ENCODE measurements at regions of chr10 and their contacts with region 1.

Region 1: GRCh38 chr10:103192451-103193106 is 493 bp downstream of the NT5C2 start:
- DNase-seq: peak; percentile 15
- H3K4me3 ChIP-seq: peak overlapping the region; percentile 83
- H3K27ac ChIP-seq: peak overlapping the region; percentile 92
- H3K27me3 ChIP-seq: no peaks in the 10 kb centered on the region
- CTCF ChIP-seq: no peak

Region 2: GRCh38 chr10:103153302-103154197 is 39.0 kb before region 1 on chr10:
- CTCF ChIA-PET with region 1: no interaction called
- POLR2A ChIA-PET with region 1: interaction called, 12 read pairs
- DNase-seq: no peak
- H3K4me3 ChIP-seq: peak overlapping the region; percentile 33; the same call in 1 of the 2 replicates
- H3K27ac ChIP-seq: peak overlapping the region; percentile 74
- H3K27me3 ChIP-seq: no peaks in the 10 kb centered on the region
- CTCF ChIP-seq: no peak

Region 3: GRCh38 chr10:103231047-103231551 is 38.5 kb after region 1 on chr10:
- CTCF ChIA-PET with region 1: interaction called, 3 read pairs
- POLR2A ChIA-PET with region 1: interaction called, 31 read pairs
- DNase-seq: peak; percentile 91
- H3K4me3 ChIP-seq: no peak overlapping the region
- H3K27ac ChIP-seq: peak overlapping the region; percentile 99
- H3K27me3 ChIP-seq: no peaks in the 10 kb centered on the region
- CTCF ChIP-seq: no peak

Region 4: GRCh38 chr10:103238506-103239252 is 46.1 kb after region 1 on chr10:
- CTCF ChIA-PET with region 1: interaction called, 28 read pairs
- POLR2A ChIA-PET with region 1: interaction called, 12 read pairs
- DNase-seq: peak; percentile 15
- H3K4me3 ChIP-seq: no peak overlapping the region
- H3K27ac ChIP-seq: no peak overlapping the region
- H3K27me3 ChIP-seq: no peaks in the 10 kb centered on the region
- CTCF ChIP-seq: peak; percentile 56

Region 5: DNA sequence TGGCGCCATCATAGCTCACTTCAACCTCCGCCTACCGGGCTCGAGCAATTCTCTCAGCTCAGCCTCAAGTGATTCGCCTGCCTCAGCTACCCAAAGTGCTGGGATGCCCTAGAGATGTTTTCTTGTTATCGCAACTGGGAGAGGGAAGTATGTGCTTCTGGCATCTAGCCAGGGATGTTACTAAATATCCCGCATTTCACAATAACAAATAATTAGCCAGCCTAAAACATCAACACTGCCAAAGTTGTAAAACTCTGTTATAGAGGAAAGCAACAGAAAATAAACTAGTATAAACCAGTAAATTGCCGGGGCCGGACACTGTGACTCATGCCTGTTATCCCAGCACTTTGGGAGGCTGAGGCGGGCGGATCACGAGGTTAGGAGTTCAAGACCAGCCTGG is 91.6 kb after region 1 on chr10:
- CTCF ChIA-PET with region 1: no interaction called
- POLR2A ChIA-PET with region 1: no interaction called
- DNase-seq: no peak
- H3K4me3 ChIP-seq: no peak overlapping the region
- H3K27ac ChIP-seq: no peak overlapping the region
- H3K27me3 ChIP-seq: peaks cover 2% of the 10 kb centered on the region
- CTCF ChIP-seq: no peak

Region 6: DNA sequence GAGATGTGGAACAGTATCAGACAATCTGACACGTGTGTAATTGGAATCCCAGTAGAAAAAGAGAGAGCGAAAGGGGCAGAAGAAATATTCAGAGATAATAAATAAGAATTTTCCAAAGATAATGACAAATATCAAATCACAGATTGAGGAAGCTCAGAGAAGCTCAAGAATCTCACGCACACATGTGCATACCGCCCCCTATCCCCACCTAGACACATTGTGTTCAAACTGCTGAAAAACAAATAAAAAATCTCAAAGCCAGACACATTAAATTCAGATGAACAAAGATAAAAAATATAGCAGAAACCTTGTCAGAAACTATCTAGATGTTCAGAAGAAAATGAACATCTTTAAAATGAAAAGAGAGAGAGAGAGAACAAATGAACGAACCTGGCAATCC is 946.6 kb after region 1 on chr10:
- CTCF ChIA-PET with region 1: no interaction called
- POLR2A ChIA-PET with region 1: no interaction called
- DNase-seq: no peak
- H3K4me3 ChIP-seq: no peak overlapping the region
- H3K27ac ChIP-seq: no peak overlapping the region
- H3K27me3 ChIP-seq: peaks cover 3% of the 10 kb centered on the region
- CTCF ChIP-seq: peak; percentile 59

Measured in AG04450 (cell line).